ENCODE measurements at regions of chr6 and their contacts with region 1.

Region 1: DNA sequence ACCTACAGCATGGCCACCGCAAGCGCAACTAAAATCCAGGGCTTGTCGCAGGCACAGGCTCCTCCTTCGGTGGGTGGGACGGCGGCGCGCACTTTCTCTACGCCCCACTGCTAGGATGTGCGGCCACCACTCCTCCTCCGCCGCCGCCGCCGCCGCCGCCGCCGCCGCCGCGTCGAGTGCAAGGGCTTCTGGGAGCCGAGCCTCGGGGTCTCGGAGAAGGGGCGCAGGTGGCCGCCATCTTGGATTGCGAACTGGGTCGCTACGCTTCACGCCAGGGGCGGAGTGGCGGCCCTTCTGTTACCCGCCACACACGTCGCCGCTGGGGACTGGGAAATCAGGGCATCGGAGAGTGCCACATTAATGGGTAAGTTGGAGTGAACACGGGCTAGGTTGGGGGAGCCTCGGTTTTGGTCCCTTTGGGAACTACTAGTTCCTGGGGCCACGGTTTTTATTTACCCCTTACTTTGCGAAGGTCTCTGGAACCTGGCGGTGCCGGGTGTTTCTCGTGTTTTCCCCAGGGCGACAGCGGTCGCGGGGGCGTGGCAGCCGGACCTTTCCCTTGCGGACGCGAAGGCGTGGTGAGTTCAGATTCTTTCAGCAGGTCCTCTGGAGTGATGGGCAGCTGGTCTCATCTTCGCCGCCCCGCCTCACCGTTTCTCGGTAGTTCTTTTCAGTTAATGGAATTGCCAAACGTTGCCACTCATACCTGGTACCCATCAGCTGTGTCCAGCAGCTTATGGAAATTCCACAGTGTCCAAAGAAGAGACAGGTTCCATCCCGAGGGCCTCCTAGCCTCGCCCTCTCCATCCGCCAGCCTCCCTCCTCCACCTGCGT is at the start of gene KPNA5:
- DNase-seq: peak; percentile 89
- H3K4me3 Mint-ChIP-seq: peak within 1 kb of the TSS; percentile 96
- H3K27ac Mint-ChIP-seq: peak within 1 kb of the TSS; percentile 94
- H3K4me1 Mint-ChIP-seq: peaks cover 11% of the 10 kb centered on the region
- H3K27me3 Mint-ChIP-seq: no peaks in the 10 kb centered on the region
- CTCF ChIP-seq: no peak
- total RNA-seq, gene KPNA5: 6.0 and 7.3 TPM in 2 replicates

Region 2: DNA sequence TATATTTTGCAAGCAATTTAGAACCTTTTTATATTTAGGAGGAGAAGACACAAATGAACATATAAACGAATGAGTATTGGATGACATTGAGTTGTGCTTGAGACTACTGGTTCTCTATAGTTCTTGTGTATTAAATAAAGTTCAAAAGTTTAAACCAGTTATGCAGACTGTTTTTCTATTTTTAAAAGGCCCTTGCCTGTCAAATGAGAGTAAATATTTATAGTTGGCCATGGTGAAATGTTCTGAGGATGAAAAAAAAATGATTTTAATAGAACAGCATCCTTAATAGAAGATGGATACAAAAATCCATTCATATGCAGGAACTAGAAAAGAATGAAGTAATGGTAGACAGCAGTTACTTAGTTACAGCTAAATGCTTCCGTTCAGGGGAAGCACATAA is 491.7 kb before region 1 on chr6:
- CTCF ChIA-PET with region 1: no interaction called
- POLR2A ChIA-PET with region 1: no interaction called
- intact Hi-C with region 1: no loop called
- DNase-seq: no peak
- H3K4me3 Mint-ChIP-seq: no peak overlapping the region
- H3K27ac Mint-ChIP-seq: no peak overlapping the region
- H3K4me1 Mint-ChIP-seq: no peaks in the 10 kb centered on the region
- H3K27me3 Mint-ChIP-seq: no peaks in the 10 kb centered on the region
- CTCF ChIP-seq: no peak

Region 3: DNA sequence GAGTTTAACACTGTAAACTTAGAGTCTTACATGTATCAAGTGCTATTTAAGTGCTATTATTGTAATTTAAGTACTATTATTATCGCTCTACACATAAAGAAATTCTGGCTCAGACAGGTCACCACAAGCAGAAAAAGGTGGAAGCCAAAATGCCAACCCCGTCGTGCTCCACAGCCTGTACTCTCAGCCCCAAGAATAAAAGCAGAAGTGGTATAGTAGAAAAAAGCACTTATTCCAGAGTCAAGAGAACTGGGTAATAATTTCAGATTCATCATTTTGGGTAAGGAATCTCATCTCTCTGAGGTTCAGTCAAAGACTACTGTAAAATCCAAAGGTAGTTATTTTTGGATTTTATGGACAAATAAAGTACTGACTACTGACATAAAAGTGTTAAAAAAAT is 13.6 kb before region 1 on chr6:
- CTCF ChIA-PET with region 1: interaction called, 4 read pairs
- POLR2A ChIA-PET with region 1: interaction called, 68 read pairs
- intact Hi-C with region 1: no loop called
- DNase-seq: peak; percentile 5
- H3K4me3 Mint-ChIP-seq: peak overlapping the region; percentile 93
- H3K27ac Mint-ChIP-seq: peak overlapping the region; percentile 96
- H3K4me1 Mint-ChIP-seq: peaks cover 33% of the 10 kb centered on the region
- H3K27me3 Mint-ChIP-seq: no peaks in the 10 kb centered on the region
- CTCF ChIP-seq: no peak

Region 4: GRCh38 chr6:116812051-116812650 is 131.0 kb after region 1 on chr6:
- CTCF ChIA-PET with region 1: no interaction called
- POLR2A ChIA-PET with region 1: no interaction called
- intact Hi-C with region 1: no loop called
- DNase-seq: no peak
- H3K4me3 Mint-ChIP-seq: no peak overlapping the region
- H3K27ac Mint-ChIP-seq: peak overlapping the region; percentile 32
- H3K4me1 Mint-ChIP-seq: no peaks in the 10 kb centered on the region
- H3K27me3 Mint-ChIP-seq: peaks cover 20% of the 10 kb centered on the region
- CTCF ChIP-seq: no peak

Measured in MCF 10A (cell line).